ENCODE measurements at regions of chr17 and their contacts with region 1.

Region 1: DNA sequence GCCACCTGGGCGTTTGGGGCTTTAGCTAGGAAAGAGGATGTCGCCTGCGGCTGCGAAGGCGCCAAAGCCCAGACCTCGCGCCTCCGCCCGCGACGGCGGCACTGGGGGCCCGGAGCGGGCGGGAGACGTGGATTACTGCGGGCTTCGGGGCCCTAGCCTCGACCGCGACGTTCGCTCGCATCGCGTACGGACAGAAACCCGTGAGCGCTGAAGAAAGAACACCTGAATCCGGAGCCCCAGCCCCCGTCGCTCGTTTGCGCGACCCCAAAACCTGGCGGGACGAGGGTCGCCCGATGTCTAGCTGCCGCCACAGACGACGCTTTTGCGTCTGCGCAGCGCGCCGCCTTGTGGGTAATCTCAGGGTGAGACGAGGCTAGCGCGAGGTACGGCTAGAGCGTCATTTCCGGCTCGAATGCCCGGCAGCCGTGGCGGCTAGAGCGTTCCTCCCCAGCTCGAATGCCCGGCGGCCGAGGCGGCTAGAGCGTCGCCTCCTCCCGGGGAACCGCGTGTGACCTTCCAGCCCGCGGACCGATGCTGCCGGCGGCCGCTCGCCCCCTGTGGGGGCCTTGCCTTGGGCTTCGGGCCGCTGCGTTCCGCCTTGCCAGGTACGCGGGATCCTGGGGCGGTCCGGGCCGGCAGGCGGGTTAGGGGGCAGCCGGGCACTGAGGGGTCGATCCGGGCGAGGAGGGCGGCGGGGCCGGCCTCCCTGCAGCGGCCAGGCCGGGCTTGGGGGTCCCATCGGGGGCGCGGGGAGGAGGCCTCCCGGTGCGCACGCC is at the start of gene MRPL12:
- H3K4me3 ChIP-seq: peak within 1 kb of the TSS; percentile 73
- H3K27ac ChIP-seq: peak within 1 kb of the TSS; percentile 97
- H3K4me1 ChIP-seq: peaks cover 6% of the 10 kb centered on the region; the same call in 1 of the 2 replicates
- CTCF ChIP-seq: peak; percentile 77

Region 2: GRCh38 chr17:81666342-81667191 is 36.6 kb before region 1 on chr17 and contains the starts of genes CCDC137 and OXLD1:
- CTCF ChIA-PET with region 1: no interaction called
- POLR2A ChIA-PET with region 1: interaction called, 20 read pairs
- H3K4me3 ChIP-seq: peak within 1 kb of the TSS; percentile 88
- H3K27ac ChIP-seq: peak within 1 kb of the TSS; percentile 90
- H3K4me1 ChIP-seq: peaks cover 5% of the 10 kb centered on the region; the same call in 1 of the 2 replicates
- CTCF ChIP-seq: no peak

Region 3: GRCh38 chr17:81676906-81677305 is 26.3 kb before region 1 on chr17:
- CTCF ChIA-PET with region 1: interaction called, 9 read pairs
- POLR2A ChIA-PET with region 1: interaction called, 109 read pairs
- H3K4me3 ChIP-seq: no peak overlapping the region
- H3K27ac ChIP-seq: no peak overlapping the region
- H3K4me1 ChIP-seq: no peaks in the 10 kb centered on the region
- CTCF ChIP-seq: no peak

Region 4: DNA sequence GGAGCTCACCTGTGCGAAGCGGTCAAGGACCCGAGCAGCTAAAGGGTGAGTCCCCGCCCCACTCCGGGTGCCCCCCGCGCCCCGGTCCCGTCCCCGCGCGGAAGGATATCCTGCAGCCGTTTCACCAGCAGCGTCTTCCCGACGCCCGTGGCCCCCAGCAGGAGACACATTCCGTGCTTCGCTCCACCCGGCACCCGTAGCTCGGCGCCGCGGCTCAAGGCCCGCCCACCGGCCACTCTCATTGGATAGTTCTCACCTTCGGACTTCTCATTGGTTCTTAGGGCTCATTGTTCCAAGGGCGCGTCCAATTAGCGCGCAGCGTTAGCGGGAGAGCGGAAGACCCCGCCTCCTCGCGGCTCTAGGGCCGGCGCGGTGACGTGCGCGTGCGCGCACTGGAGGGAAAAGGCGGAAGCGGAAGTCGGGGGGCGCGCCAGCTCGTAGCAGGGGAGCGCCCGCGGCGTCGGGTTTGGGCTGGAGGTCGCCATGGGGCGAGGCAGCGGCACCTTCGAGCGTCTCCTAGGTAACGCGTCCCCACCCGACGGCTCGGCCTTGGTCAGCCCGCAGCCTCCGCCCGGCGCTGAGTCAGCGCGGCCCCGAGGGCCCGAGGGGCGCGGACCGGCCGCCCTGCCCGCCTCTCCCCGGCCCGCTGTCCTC is 19.4 kb before region 1 on chr17 and contains the starts of genes ARL16 and HGS:
- CTCF ChIA-PET with region 1: interaction called, 4 read pairs
- POLR2A ChIA-PET with region 1: interaction called, 109 read pairs
- H3K4me3 ChIP-seq: peak within 1 kb of the TSS; percentile 92
- H3K27ac ChIP-seq: peak within 1 kb of the TSS; percentile 82
- H3K4me1 ChIP-seq: peaks cover 4% of the 10 kb centered on the region
- CTCF ChIP-seq: no peak

Region 5: GRCh38 chr17:81722184-81723120 is 19.3 kb after region 1 on chr17:
- CTCF ChIA-PET with region 1: interaction called, 4 read pairs
- POLR2A ChIA-PET with region 1: interaction called, 15 read pairs
- H3K4me3 ChIP-seq: no peak overlapping the region
- H3K27ac ChIP-seq: no peak overlapping the region
- H3K4me1 ChIP-seq: peaks cover 5% of the 10 kb centered on the region
- CTCF ChIP-seq: no peak